ENCODE measurements at regions of chr10 and their contacts with region 1.

Region 1: DNA sequence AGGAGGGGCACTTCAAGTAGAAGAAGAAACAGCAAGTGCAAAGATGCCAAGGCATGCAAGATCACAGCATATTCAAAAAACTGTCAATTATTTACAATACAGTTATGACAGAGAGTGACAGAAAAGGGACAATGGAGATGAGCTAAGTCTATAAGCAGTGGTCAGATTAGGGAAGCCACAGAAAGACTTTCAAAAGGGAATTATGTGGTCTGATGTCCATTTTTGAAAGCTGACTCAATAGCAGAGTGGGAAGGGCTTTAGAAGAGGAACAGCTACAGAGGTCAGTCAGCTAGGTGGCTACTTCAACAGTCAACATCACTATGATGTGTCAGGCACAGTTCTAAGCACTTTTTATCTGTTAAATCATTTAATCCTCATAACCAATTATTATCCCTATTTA is 45.2 kb upstream of the SPOCK2 start:
- H3K4me3 Mint-ChIP-seq: no peak overlapping the region
- H3K27ac Mint-ChIP-seq: no peak overlapping the region
- H3K4me1 Mint-ChIP-seq: peaks cover 29% of the 10 kb centered on the region
- H3K27me3 Mint-ChIP-seq: peaks cover 44% of the 10 kb centered on the region

Region 2: GRCh38 chr10:72044417-72045051 is 89.0 kb before region 1 on chr10:
- intact Hi-C with region 1: no loop called
- H3K4me3 Mint-ChIP-seq: no peak overlapping the region
- H3K27ac Mint-ChIP-seq: no peak overlapping the region
- H3K4me1 Mint-ChIP-seq: no peaks in the 10 kb centered on the region
- H3K27me3 Mint-ChIP-seq: peaks cover 11% of the 10 kb centered on the region

Region 3: GRCh38 chr10:72223743-72224101 is 90.2 kb after region 1 on chr10:
- intact Hi-C with region 1: loop called (anchors 2 kb)
- H3K4me3 Mint-ChIP-seq: no peak overlapping the region
- H3K27ac Mint-ChIP-seq: no peak overlapping the region
- H3K4me1 Mint-ChIP-seq: peaks cover 38% of the 10 kb centered on the region
- H3K27me3 Mint-ChIP-seq: no peaks in the 10 kb centered on the region